Endothelial cell of umbilical vein (primary cell): ENCODE measurements at regions of chr12 and their contacts with region 1.

Region 1: DNA sequence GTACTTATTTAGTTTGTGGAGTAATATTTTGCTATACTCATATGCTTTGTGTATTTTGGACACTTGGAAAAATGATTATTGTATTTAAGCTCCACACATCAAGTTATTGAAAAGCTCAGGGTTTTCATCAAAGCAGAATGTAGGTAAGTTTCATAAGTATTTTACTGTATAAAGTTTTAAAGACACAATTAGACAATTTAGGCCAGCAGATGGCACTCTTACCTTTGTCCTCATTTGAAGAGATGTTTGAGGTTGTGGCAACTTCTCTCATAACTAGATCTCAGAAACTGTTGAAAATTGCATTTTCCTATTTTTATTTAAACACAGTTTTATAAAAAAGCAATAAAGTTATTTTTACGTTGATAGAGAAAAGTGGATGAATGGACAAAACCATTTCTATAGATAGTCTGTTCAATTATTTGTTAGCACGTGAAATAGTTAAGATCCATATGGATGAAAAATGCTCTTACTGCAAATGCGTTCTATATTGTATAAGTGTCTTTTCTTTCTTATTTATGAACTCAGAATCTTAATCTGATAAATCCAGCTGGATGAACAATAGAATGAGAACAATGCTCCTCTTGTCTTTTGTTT is 300.0 kb downstream of the AEBP2 start:
- DNase-seq: peak; percentile 92
- H3K4me3 ChIP-seq: no peak overlapping the region
- H3K27ac ChIP-seq: peak overlapping the region; percentile 24
- H3K4me1 ChIP-seq: peaks cover 31% of the 10 kb centered on the region
- H3K27me3 ChIP-seq: no peaks in the 10 kb centered on the region
- CTCF ChIP-seq: peak; percentile 25 to 40
- POLR2A ChIP-seq: no peak

Region 2: GRCh38 chr12:19507823-19508222 is 231.5 kb before region 1 on chr12:
- CTCF ChIA-PET with region 1: interaction called, 37 read pairs
- POLR2A ChIA-PET with region 1: no interaction called
- dilution Hi-C with region 1: no loop called
- intact Hi-C with region 1: loop called (anchors 2 kb)
- DNase-seq: peak; percentile 75
- H3K4me3 ChIP-seq: no peak overlapping the region
- H3K27ac ChIP-seq: no peak overlapping the region
- H3K4me1 ChIP-seq: peaks cover 7% of the 10 kb centered on the region
- H3K27me3 ChIP-seq: no peaks in the 10 kb centered on the region
- CTCF ChIP-seq: peak in 1 of 2 donors; percentile 23
- POLR2A ChIP-seq: no peak

Region 3: DNA sequence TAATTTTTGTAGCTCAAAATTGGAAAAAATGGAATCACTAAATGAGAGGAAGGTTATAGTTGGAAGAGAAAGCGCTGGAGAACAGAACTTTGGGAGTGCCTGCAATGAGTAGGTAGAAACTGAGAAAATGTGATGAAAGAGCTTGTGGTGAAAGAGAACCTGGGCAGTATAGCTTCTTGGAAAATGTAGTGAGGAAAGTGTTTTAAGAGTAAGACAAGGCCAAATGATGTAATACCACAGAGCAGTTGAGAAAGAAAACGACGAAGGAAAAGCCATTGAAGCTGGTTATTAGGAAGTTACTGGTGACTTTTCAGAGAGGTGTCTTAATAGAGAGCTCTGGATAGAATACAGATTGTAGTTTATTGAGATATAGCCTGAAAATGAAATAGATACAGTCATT is 44.7 kb before region 1 on chr12:
- CTCF ChIA-PET with region 1: interaction called, 6 read pairs
- POLR2A ChIA-PET with region 1: no interaction called
- dilution Hi-C with region 1: no loop called
- intact Hi-C with region 1: loop called (anchors 1 kb)
- DNase-seq: no peak
- H3K4me3 ChIP-seq: no peak overlapping the region
- H3K27ac ChIP-seq: peak overlapping the region; percentile 58
- H3K4me1 ChIP-seq: peaks cover 20% of the 10 kb centered on the region
- H3K27me3 ChIP-seq: no peaks in the 10 kb centered on the region
- CTCF ChIP-seq: no peak
- POLR2A ChIP-seq: no peak

Region 4: GRCh38 chr12:19792028-19792427 is 52.7 kb after region 1 on chr12:
- CTCF ChIA-PET with region 1: no interaction called
- POLR2A ChIA-PET with region 1: no interaction called
- dilution Hi-C with region 1: no loop called
- intact Hi-C with region 1: no loop called
- DNase-seq: no peak
- H3K4me3 ChIP-seq: no peak overlapping the region
- H3K27ac ChIP-seq: no peak overlapping the region
- H3K4me1 ChIP-seq: no peaks in the 10 kb centered on the region
- H3K27me3 ChIP-seq: no peaks in the 10 kb centered on the region
- CTCF ChIP-seq: no peak
- POLR2A ChIP-seq: no peak

Region 5: DNA sequence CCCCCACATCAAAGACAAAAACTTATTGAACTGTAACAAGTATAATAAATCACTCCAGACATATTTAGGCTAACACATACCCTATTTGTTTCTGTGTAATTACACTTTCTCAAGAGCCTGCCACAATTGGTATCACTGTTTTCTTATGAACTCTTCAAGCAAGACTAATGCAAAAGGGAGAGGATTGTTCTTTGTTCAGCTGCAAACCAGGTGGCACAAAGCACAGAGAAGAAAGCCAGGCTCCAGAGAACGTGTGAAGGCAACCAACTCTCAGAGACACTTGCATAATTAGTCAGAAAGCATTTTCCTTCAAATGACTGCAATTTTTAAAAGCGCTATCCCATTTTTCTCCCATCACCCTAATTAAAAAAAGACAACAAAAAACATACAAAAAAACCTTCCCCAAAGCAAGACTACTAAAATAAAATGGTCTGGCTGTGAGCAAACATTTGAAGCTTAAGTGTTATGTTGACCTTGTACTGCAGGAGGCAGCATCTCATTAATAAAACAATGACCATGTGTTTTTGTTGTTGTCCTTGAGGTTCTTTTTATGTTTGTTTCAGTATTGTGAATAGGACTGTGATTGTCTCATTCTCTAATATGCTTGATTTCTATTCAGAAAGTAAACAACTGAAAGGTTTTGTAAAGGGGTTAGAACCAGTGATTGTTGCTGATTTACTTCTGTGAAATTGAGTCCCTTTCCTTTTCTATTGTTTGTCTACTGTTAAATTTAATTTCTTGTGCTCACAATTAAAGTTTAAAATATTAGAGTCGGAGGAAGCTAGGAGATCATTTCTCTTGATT is 176.3 kb after region 1 on chr12:
- CTCF ChIA-PET with region 1: interaction called, 27 read pairs
- POLR2A ChIA-PET with region 1: no interaction called
- dilution Hi-C with region 1: no loop called
- intact Hi-C with region 1: loop called (anchors 2 kb)
- DNase-seq: peak; percentile 85
- H3K4me3 ChIP-seq: no peak overlapping the region
- H3K27ac ChIP-seq: no peak overlapping the region
- H3K4me1 ChIP-seq: peaks cover 5% of the 10 kb centered on the region
- H3K27me3 ChIP-seq: no peaks in the 10 kb centered on the region
- CTCF ChIP-seq: peak; percentile 42 to 48
- POLR2A ChIP-seq: no peak

Region 6: GRCh38 chr12:20369305-20370005 is 630.2 kb after region 1 on chr12:
- CTCF ChIA-PET with region 1: interaction called, 7 read pairs
- POLR2A ChIA-PET with region 1: no interaction called
- dilution Hi-C with region 1: no loop called
- intact Hi-C with region 1: loop called (anchors 2 kb)
- DNase-seq: peak; percentile 85
- H3K4me3 ChIP-seq: peak overlapping the region; percentile 87 to 99 (median 97)
- H3K27ac ChIP-seq: peak overlapping the region; percentile 75
- H3K4me1 ChIP-seq: peaks cover 28% of the 10 kb centered on the region
- H3K27me3 ChIP-seq: no peaks in the 10 kb centered on the region
- CTCF ChIP-seq: peak in 1 of 2 donors; percentile 23
- POLR2A ChIP-seq: peak; percentile 71

Region 7: DNA sequence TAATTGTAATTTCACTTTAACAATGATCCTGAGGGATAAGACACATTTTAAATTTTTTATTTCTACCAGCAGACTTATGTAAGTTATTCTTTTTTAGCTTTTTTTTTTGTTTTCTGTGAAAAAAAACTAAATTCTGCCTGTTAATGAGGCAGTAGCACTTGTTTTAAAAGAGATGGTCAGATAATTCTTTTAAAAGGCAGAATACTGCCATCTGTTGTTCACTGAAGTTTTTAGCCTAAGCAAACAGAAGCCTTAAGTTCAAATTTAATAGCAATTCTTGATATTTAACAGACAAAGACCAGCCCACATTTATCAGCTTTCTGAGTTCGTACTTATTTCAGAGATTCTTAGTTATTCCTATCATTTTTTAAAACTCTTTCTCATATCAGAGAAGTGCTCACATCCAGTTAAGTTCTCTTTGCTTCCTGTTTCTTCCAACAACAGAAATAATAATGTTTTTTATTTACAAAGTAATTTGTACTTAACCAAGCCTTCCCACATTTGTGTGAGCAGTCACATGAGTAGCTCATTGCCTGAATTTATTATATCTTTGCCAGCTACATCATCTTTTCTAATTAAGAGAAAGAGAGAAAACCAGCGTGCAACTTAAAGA is 862.5 kb after region 1 on chr12:
- CTCF ChIA-PET with region 1: interaction called, 14 read pairs
- POLR2A ChIA-PET with region 1: no interaction called
- dilution Hi-C with region 1: no loop called
- intact Hi-C with region 1: loop called (anchors 1 kb)
- DNase-seq: peak; percentile 75
- H3K4me3 ChIP-seq: no peak overlapping the region
- H3K27ac ChIP-seq: no peak overlapping the region
- H3K4me1 ChIP-seq: peaks cover 9% of the 10 kb centered on the region
- H3K27me3 ChIP-seq: no peaks in the 10 kb centered on the region
- CTCF ChIP-seq: peak in 1 of 2 donors; percentile 24
- POLR2A ChIP-seq: no peak